ENCODE measurements at regions of chr3 and their contacts with region 1.

Region 1: DNA sequence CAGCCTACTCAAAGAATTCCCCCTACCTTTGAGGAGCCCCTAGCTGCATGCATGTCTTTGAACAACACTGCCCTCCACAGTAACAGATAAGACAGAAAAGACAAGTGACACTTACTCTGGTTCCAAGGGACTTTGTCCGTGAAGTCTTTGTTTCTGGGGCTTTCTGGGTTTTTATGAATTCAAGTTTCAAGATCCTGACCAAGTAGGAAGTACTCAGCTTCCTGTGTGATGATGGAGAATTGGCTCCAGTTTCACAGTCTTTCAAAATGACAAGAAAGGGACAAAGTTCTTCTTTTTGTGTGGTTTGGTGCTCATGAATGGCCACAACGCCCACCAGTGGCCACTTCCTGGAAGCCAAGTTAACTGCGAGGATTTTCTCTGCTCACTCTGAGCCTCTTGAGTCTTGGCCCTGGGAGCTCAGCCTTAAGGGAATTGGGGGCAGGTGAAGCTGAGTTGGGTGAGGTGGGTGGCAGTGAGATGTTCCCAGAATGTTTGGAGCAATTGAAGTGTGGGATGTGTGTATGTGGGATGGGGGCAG is at the start of gene CCR1:
- DNase-seq: peak; percentile 62
- H3K4me3 Mint-ChIP-seq: no peak within 1 kb of the TSS
- H3K27ac Mint-ChIP-seq: no peak within 1 kb of the TSS
- H3K4me1 Mint-ChIP-seq: no peaks in the 10 kb centered on the region
- H3K27me3 Mint-ChIP-seq: no peaks in the 10 kb centered on the region
- CTCF ChIP-seq: peak; percentile 46
- total RNA-seq, gene CCR1: not detected in 2 replicates

Region 2: DNA sequence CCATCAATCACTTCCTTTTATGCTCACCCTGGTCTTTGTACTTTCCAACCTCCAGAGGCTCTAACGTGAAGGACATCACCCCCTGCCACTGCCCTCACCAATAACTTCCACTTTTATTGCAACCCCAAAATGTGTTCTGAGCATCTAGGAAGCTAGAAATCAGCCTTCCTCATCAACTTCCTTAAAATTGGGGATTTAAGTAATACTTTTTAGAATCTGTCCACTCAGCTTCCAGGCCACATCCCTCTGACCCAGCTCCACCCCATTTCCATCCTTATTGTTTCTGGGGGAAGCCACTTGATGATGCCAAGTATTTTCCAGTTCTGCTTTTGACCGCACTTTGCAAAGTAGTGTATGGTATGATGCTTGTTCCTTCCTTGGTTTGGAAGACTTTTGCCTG is 107.4 kb before region 1 on chr3:
- CTCF ChIA-PET with region 1: no interaction called
- POLR2A ChIA-PET with region 1: no interaction called
- intact Hi-C with region 1: loop called (anchors 1 kb)
- DNase-seq: no peak
- H3K4me3 Mint-ChIP-seq: no peak overlapping the region
- H3K27ac Mint-ChIP-seq: peak overlapping the region; percentile 51
- H3K4me1 Mint-ChIP-seq: peaks cover 18% of the 10 kb centered on the region
- H3K27me3 Mint-ChIP-seq: no peaks in the 10 kb centered on the region
- CTCF ChIP-seq: no peak

Region 3: GRCh38 chr3:46143951-46144473 is 64.2 kb before region 1 on chr3:
- CTCF ChIA-PET with region 1: no interaction called
- POLR2A ChIA-PET with region 1: no interaction called
- intact Hi-C with region 1: no loop called
- DNase-seq: no peak
- H3K4me3 Mint-ChIP-seq: no peak overlapping the region
- H3K27ac Mint-ChIP-seq: no peak overlapping the region
- H3K4me1 Mint-ChIP-seq: no peaks in the 10 kb centered on the region
- H3K27me3 Mint-ChIP-seq: no peaks in the 10 kb centered on the region
- CTCF ChIP-seq: no peak

Region 4: GRCh38 chr3:46280105-46280797 is 72.0 kb after region 1 on chr3:
- CTCF ChIA-PET with region 1: no interaction called
- POLR2A ChIA-PET with region 1: no interaction called
- intact Hi-C with region 1: no loop called
- DNase-seq: peak; percentile 85
- H3K4me3 Mint-ChIP-seq: no peak overlapping the region
- H3K27ac Mint-ChIP-seq: no peak overlapping the region
- H3K4me1 Mint-ChIP-seq: peaks cover 7% of the 10 kb centered on the region
- H3K27me3 Mint-ChIP-seq: no peaks in the 10 kb centered on the region
- CTCF ChIP-seq: no peak